HAP-1 (cell line): ENCODE measurements at regions of chr12 and their contacts with region 1.

Region 1: DNA sequence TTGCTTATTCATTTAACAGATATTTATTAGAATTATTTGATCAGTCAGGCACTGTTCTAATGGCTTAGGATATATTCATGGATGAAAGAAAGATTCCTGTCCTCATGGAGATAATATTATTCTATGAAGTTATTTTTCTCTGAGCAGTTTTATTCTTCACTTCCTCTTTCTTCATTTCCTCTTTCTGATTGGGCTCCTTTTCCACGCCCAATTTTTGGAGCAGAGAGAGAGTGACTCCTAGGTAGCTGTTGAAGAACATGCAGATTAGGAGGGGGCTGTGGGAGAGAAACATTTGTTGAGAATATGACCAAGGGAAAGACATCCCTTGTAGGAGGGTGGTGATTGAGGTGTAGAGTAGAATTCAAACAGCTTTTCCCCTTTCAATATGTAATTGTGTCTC is 6.0 kb upstream of the YARS2 start:
- DNase-seq: no peak
- H3K4me3 ChIP-seq: no peak overlapping the region
- H3K4me1 ChIP-seq: 0 out of 2 replicates have a peak, but pooled peaks cover 2% of the 10 kb centered on the region
- H3K27me3 ChIP-seq: peaks cover 24% of the 10 kb centered on the region

Region 2: GRCh38 chr12:32285489-32285888 is 476.2 kb before region 1 on chr12:
- in situ Hi-C with region 1: no loop called
- DNase-seq: peak in 1 of 2 experiments; percentile 20
- H3K4me3 ChIP-seq: no peak overlapping the region
- H3K4me1 ChIP-seq: peaks cover 23% of the 10 kb centered on the region
- H3K27me3 ChIP-seq: no peaks in the 10 kb centered on the region

Region 3: GRCh38 chr12:32312049-32312670 is 449.6 kb before region 1 on chr12:
- in situ Hi-C with region 1: no loop called
- DNase-seq: peak; percentile 25 to 86
- H3K4me3 ChIP-seq: no peak overlapping the region
- H3K4me1 ChIP-seq: peaks cover 5% of the 10 kb centered on the region
- H3K27me3 ChIP-seq: no peaks in the 10 kb centered on the region

Region 4: GRCh38 chr12:32843528-32844095 is 81.9 kb after region 1 on chr12:
- in situ Hi-C with region 1: no loop called
- DNase-seq: peak in 1 of 2 experiments; percentile 87
- H3K4me3 ChIP-seq: no peak overlapping the region
- H3K4me1 ChIP-seq: peaks cover 17% of the 10 kb centered on the region
- H3K27me3 ChIP-seq: no peaks in the 10 kb centered on the region

Region 5: GRCh38 chr12:32939801-32940200 is 178.1 kb after region 1 on chr12:
- in situ Hi-C with region 1: loop called (anchors 10 kb)
- DNase-seq: no peak
- H3K4me3 ChIP-seq: no peak overlapping the region
- H3K4me1 ChIP-seq: no peaks in the 10 kb centered on the region
- H3K27me3 ChIP-seq: peaks cover 3% of the 10 kb centered on the region; the same call in 1 of the 2 replicates